ENCODE measurements at regions of chr10 and their contacts with region 1.

Region 1: DNA sequence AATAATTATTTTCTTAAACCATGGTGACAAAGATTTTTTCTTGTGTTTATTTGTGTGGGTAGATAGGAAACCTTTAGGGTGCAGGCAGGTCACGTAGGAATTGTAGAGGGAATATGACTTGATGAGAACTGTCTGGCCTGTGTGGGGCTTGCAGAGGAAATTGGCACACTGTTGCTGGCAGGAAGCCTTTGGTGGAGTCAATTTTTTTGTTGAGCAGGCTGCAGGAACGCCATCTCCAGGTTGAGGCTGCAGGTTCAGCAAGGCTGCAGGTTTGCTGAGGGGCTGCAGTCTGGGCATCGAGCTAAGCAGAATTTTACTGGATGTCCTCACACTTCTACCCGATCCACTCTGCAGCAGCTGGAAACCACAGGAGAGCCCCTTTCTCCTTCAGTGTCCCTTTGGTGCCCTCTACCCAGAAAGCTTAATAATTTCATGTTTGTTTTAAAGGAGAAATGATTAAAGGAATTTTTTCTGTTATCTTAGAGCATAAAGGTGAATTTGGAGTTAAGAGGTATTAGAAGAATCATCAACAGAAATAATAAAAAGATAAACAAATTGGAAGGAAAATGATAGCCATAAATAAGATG is 37.0 kb downstream of the TBC1D12 start:
- DNase-seq: no peak
- ATAC-seq: no peak
- H3K4me3 ChIP-seq: no peak overlapping the region
- H3K4me3 Mint-ChIP-seq: no peak overlapping the region
- H3K27ac ChIP-seq: no peak overlapping the region
- H3K27ac Mint-ChIP-seq: no peak overlapping the region
- H3K4me1 ChIP-seq: no peaks in the 10 kb centered on the region
- H3K4me1 Mint-ChIP-seq: peaks cover 2% of the 10 kb centered on the region
- H3K27me3 ChIP-seq: no peaks in the 10 kb centered on the region
- H3K27me3 Mint-ChIP-seq: no peaks in the 10 kb centered on the region
- CTCF ChIP-seq: no peak

Region 2: GRCh38 chr10:94279835-94280709 is 159.3 kb before region 1 on chr10:
- CTCF ChIA-PET with region 1: interaction called, 48 read pairs
- POLR2A ChIA-PET with region 1: no interaction called
- intact Hi-C with region 1: loop called (anchors 1 kb)
- DNase-seq: peak; percentile 71
- ATAC-seq: peak; percentile 49
- H3K4me3 ChIP-seq: no peak overlapping the region
- H3K4me3 Mint-ChIP-seq: no peak overlapping the region
- H3K27ac ChIP-seq: no peak overlapping the region
- H3K27ac Mint-ChIP-seq: no peak overlapping the region
- H3K4me1 ChIP-seq: no peaks in the 10 kb centered on the region
- H3K4me1 Mint-ChIP-seq: peaks cover 6% of the 10 kb centered on the region
- H3K27me3 ChIP-seq: peaks cover 0 to 9% (median 3%) of the 10 kb centered on the region in 4 experiments
- H3K27me3 Mint-ChIP-seq: peaks cover 24% of the 10 kb centered on the region
- CTCF ChIP-seq: peak; percentile 98

Region 3: DNA sequence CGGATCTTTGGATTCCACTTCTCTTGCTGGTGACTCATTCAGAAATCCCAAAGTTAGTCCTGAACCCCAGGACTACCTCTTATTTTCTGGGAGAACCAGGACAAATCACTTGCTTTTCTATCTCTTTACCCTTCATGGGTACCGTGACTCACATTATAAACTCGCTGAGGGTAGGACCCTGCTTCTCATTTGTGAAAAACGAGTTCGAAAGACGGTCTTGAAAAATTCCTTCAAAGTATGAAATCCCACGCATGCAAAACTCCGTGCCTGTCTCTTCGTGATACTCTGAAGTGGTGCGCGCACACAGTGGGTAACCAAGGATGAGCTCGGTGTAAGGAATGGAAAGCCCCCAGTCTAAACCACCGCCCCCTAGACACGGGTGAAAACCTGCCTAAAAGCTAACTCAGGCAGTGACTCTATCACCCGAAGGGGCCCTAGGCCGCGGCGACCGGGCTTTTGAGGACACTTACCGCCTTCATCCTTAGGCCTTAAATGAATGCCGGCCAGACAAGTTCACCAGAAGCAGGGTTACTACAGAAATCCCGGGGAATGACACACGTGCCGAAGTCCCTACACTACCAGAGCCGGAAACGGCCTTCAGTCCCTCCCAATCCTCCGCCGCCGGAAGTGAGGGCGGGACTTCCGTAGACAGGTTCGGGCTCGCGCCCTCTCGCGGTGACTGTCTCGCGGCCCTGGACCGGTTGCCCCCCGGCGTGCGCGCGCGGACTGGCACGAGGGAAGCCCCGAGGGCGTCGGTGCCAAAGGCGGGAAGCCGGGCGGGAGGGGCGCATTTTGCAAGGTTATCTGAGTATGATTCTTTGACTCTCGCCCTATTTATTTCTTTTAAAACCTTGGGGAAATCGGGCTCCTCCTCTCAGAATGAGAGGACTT is 76.8 kb before region 1 on chr10 and contains the start of gene NOC3L:
- CTCF ChIA-PET with region 1: interaction called, 18 read pairs
- POLR2A ChIA-PET with region 1: no interaction called
- intact Hi-C with region 1: loop called (anchors 1 kb)
- DNase-seq: peak; percentile 98
- ATAC-seq: peak; percentile 97
- H3K4me3 ChIP-seq: peak within 1 kb of the TSS; percentile 66 to 95 (median 86)
- H3K4me3 Mint-ChIP-seq: peak within 1 kb of the TSS; percentile 98
- H3K27ac ChIP-seq: peak within 1 kb of the TSS; percentile 94 to 95
- H3K27ac Mint-ChIP-seq: peak within 1 kb of the TSS; percentile 98
- H3K4me1 ChIP-seq: peaks cover 16 to 18% of the 10 kb centered on the region in 2 donors
- H3K4me1 Mint-ChIP-seq: peaks cover 36% of the 10 kb centered on the region
- H3K27me3 ChIP-seq: peaks cover 0 to 5% (median 2%) of the 10 kb centered on the region in 4 experiments
- H3K27me3 Mint-ChIP-seq: peaks cover 11% of the 10 kb centered on the region
- CTCF ChIP-seq: peak; percentile 92
- total RNA-seq, gene NOC3L: 37.5 and 42.0 TPM in 2 replicates

Region 4: DNA sequence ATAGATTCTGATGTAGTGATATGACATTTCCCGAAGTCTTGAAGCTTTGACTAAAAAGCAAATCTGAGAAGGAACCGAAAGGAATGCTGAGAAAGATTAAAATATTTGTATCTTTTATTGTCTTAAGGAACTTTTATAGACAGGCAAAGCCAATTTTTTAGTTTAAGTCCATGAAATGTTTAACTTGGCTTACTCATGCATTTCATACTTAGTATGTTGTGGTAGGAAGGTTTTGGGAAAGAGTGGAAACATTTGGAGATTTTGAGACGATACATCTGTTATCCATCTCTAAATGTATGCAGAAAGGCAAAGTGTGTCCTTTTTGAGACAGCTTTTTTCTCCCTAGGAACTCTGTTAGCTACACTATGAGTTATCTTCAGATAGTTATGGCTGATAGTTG is 26.9 kb before region 1 on chr10:
- CTCF ChIA-PET with region 1: interaction called, 23 read pairs
- POLR2A ChIA-PET with region 1: no interaction called
- intact Hi-C with region 1: no loop called
- DNase-seq: no peak
- ATAC-seq: no peak
- H3K4me3 ChIP-seq: no peak overlapping the region
- H3K4me3 Mint-ChIP-seq: no peak overlapping the region
- H3K27ac ChIP-seq: no peak overlapping the region
- H3K27ac Mint-ChIP-seq: no peak overlapping the region
- H3K4me1 ChIP-seq: no peaks in the 10 kb centered on the region
- H3K4me1 Mint-ChIP-seq: peaks cover 10% of the 10 kb centered on the region
- H3K27me3 ChIP-seq: peaks cover 0 to 6% (median 2%) of the 10 kb centered on the region in 4 experiments
- H3K27me3 Mint-ChIP-seq: peaks cover 3% of the 10 kb centered on the region
- CTCF ChIP-seq: no peak

Region 5: DNA sequence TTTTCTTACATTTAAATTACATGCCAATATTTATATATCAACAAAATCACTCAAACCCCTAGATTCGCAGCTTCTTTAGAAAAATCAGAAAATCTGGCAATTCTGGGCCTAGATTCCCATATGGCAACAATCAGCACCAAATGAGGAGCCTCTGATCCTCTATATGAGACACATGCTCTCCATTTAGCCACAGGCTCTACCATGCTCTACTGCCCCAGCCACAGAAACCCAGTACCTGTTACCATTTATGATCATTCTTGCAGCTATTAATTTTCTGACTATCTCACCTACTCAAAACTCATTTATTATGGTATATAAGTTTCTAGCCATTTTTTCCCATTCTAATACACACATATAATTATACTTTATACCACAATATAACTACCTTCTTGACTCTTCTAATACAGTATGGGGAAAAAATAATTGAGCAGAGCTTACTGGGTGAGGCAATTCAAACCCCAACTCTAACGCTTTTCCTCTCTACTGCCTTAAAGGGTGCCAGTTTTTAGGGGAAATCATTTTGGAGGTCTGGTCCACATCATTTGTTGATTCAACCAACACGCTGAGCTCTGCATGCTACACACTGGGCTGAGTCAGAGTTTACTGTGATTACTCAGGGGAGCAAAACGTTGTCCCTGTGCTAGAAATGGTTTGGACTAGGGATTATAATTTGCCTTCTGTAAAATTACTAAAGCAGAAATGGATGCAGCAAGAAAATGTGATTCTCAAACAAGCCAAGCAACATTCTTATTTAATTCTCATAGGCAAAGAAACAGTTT is 839.9 kb after region 1 on chr10:
- CTCF ChIA-PET with region 1: no interaction called
- POLR2A ChIA-PET with region 1: no interaction called
- intact Hi-C with region 1: no loop called
- DNase-seq: no peak
- ATAC-seq: no peak
- H3K4me3 ChIP-seq: no peak overlapping the region
- H3K4me3 Mint-ChIP-seq: no peak overlapping the region
- H3K27ac ChIP-seq: peak overlapping the region in 1 of 2 donors; percentile 40
- H3K27ac Mint-ChIP-seq: peak overlapping the region; percentile 54
- H3K4me1 ChIP-seq: peaks cover 39 to 52% of the 10 kb centered on the region in 2 donors
- H3K4me1 Mint-ChIP-seq: peaks cover 74% of the 10 kb centered on the region
- H3K27me3 ChIP-seq: no peaks in the 10 kb centered on the region
- H3K27me3 Mint-ChIP-seq: no peaks in the 10 kb centered on the region
- CTCF ChIP-seq: no peak

Measured in B cell (primary cell).